Left colon (tissue), 2 donors: ENCODE measurements at regions of chr1 and their contacts with region 1.

Region 1: DNA sequence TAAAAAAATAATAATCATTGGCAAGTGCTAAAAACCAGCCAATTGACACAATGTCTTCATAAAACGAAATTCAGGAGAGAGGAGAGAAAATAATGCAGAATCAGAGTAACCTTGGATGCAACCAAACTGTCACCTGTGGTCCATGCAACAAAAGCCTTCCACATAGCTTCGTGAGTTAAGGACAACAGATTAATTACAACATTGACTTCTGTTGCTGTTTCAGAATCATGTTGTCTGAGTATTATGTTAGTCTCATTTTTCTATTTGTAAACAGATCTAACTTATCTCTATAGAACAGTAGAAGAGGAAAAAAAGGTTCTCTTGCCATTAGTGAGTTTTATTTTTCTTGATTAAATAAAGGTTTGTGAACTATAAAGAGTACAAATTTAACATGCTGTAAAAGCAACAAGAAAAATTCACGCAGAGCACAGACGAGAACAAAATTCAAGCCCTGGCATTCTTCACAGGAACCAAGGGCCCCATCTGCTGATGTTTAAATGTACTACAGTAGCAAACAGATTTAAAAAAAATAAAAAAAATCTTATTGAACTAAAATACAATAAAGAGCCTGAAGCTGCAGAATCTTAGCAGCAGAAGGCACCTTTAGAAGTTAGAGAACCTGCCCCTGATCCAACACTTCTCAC is 381.1 kb upstream of the PKN2 start:
- DNase-seq: no peak
- ATAC-seq: peak; percentile 66

Region 2: GRCh38 chr1:88068407-88068960 is 234.5 kb before region 1 on chr1:
- intact Hi-C with region 1: no loop called
- DNase-seq: no peak
- ATAC-seq: no peak

Region 3: GRCh38 chr1:88180449-88181108 is 122.4 kb before region 1 on chr1:
- intact Hi-C with region 1: loop called in 1 of 2 experiments (anchors 5 kb)
- DNase-seq: peak; percentile 72 to 81
- ATAC-seq: peak; percentile 96